ENCODE measurements at regions of chr15 and their contacts with region 1.

Region 1: DNA sequence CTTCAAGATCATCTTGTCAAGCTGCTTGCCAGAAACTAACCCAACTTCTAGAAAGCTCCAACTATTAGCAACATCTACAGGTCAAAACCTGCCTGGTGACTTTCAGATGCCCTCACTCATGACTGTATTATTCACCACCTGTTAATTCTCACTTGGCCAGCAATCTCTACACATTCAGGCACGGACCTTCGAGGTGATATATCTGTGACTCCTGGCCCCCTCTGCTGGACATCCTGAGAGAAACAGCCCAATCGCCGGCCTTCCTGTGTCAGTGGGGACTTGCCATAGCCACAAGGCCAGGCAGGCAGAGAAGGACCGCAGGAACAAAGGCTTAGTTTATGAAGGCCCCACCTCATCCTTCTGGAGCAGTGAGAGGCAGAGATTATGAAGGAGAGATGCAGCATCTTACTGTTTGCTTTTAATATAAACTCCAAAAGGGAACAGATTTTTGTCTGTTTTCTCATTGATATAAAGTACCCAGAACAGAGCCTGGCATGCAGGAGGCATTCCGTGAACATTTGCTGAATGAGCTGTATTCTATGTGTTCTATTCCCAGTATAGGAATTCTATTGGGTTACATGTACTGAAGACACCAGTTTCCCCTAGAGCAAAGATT is 24.4 kb upstream of the OCA2 start:
- DNase-seq: peak; percentile 93
- H3K4me3 ChIP-seq: no peak overlapping the region
- H3K27ac ChIP-seq: peak overlapping the region; percentile 47
- H3K4me1 ChIP-seq: peaks cover 11% of the 10 kb centered on the region
- H3K27me3 ChIP-seq: no peaks in the 10 kb centered on the region
- CTCF ChIP-seq: peak; percentile 70 to 78

Region 2: GRCh38 chr15:27928386-27928785 is 195.1 kb before region 1 on chr15:
- CTCF ChIA-PET with region 1: no interaction called
- dilution Hi-C with region 1: no loop called
- in situ Hi-C with region 1: no loop called
- intact Hi-C with region 1: no loop called
- DNase-seq: no peak
- H3K4me3 ChIP-seq: no peak overlapping the region
- H3K27ac ChIP-seq: no peak overlapping the region
- H3K4me1 ChIP-seq: no peaks in the 10 kb centered on the region
- H3K27me3 ChIP-seq: no peaks in the 10 kb centered on the region
- CTCF ChIP-seq: no peak

Region 3: DNA sequence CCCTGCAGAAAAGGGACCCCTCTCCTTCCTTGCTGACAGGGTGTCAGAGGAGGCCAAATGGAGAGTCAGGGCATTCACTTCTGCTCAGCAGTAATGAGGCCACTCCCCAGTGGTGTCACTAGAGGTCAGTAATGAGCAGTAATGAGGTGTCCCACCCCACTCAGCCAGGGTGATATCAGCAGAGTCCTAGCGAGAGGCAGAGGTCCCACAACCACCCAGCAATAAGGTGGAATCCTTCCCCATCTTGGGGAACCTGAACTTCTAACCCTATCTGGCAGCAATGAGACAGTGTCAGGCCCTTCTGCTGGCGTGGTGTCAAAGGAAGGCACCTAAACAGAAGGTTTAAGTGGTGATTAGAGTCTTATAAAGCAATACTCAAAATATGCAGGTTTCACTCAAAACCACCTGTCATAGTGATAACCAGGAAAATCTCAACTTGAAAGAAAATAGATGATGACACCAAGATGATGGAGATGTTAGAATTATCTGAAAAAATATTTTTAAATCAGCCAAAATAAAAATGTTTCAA is 37.3 kb before region 1 on chr15:
- CTCF ChIA-PET with region 1: interaction called, 4 read pairs
- dilution Hi-C with region 1: no loop called
- in situ Hi-C with region 1: no loop called
- intact Hi-C with region 1: loop called (anchors 1 kb)
- DNase-seq: peak; percentile 35
- H3K4me3 ChIP-seq: no peak overlapping the region
- H3K27ac ChIP-seq: no peak overlapping the region
- H3K4me1 ChIP-seq: no peaks in the 10 kb centered on the region
- H3K27me3 ChIP-seq: no peaks in the 10 kb centered on the region
- CTCF ChIP-seq: peak; percentile 57 to 73

Region 4: GRCh38 chr15:28184166-28184565 is 60.6 kb after region 1 on chr15:
- CTCF ChIA-PET with region 1: no interaction called
- dilution Hi-C with region 1: no loop called
- in situ Hi-C with region 1: no loop called
- intact Hi-C with region 1: loop called (anchors 10 kb)
- DNase-seq: no peak
- H3K4me3 ChIP-seq: no peak overlapping the region
- H3K27ac ChIP-seq: no peak overlapping the region
- H3K4me1 ChIP-seq: no peaks in the 10 kb centered on the region
- H3K27me3 ChIP-seq: no peaks in the 10 kb centered on the region
- CTCF ChIP-seq: no peak

Region 5: GRCh38 chr15:28289694-28290463 is 166.4 kb after region 1 on chr15:
- CTCF ChIA-PET with region 1: no interaction called
- dilution Hi-C with region 1: no loop called
- in situ Hi-C with region 1: no loop called
- intact Hi-C with region 1: no loop called
- DNase-seq: no peak
- H3K4me3 ChIP-seq: no peak overlapping the region
- H3K27ac ChIP-seq: no peak overlapping the region
- H3K4me1 ChIP-seq: no peaks in the 10 kb centered on the region
- H3K27me3 ChIP-seq: no peaks in the 10 kb centered on the region
- CTCF ChIP-seq: no peak